CD4-positive, alpha-beta memory T cell (primary cell): ENCODE measurements at regions of chr11 and their contacts with region 1.

Region 1: GRCh38 chr11:6682936-6683861 is at the start of gene MRPL17:
- DNase-seq: peak; percentile 99 to 100 (median 100)
- H3K4me3 ChIP-seq: peak within 1 kb of the TSS; percentile 82 to 99
- H3K4me3 Mint-ChIP-seq: peak within 1 kb of the TSS; percentile 97 to 99 (median 98)
- H3K27ac ChIP-seq: peak within 1 kb of the TSS; percentile 81
- H3K27ac Mint-ChIP-seq: peak within 1 kb of the TSS; percentile 95 to 100 (median 99)
- H3K4me1 ChIP-seq: peaks cover 26% of the 10 kb centered on the region
- H3K4me1 Mint-ChIP-seq: peaks cover 19 to 46% (median 25%) of the 10 kb centered on the region in 4 donors
- H3K27me3 ChIP-seq: no peaks in the 10 kb centered on the region
- H3K27me3 Mint-ChIP-seq: no peaks in the 10 kb centered on the region
- total RNA-seq, gene MRPL17: 33.4 to 36.9 TPM

Region 2: GRCh38 chr11:6320411-6321155 is 362.6 kb before region 1 on chr11 and contains the start of gene CAVIN3:
- CTCF ChIA-PET with region 1: no interaction called
- POLR2A ChIA-PET with region 1: no interaction called
- intact Hi-C with region 1: no loop called
- DNase-seq: peak in 2 of 5 donors; percentile 10 to 37
- H3K4me3 ChIP-seq: no peak within 1 kb of the TSS
- H3K4me3 Mint-ChIP-seq: peak within 1 kb of the TSS; percentile 57 to 87 (median 78)
- H3K27ac ChIP-seq: no peak within 1 kb of the TSS
- H3K27ac Mint-ChIP-seq: peak within 1 kb of the TSS in 4 of 7 donors; percentile 18 to 55 (median 40)
- H3K4me1 ChIP-seq: peaks cover 10% of the 10 kb centered on the region
- H3K4me1 Mint-ChIP-seq: peaks cover 4 to 28% (median 14%) of the 10 kb centered on the region in 4 donors
- H3K27me3 ChIP-seq: peaks cover 12% of the 10 kb centered on the region
- H3K27me3 Mint-ChIP-seq: peaks cover 35 to 41% of the 10 kb centered on the region in 2 donors
- total RNA-seq, gene CAVIN3: 0.36 TPM in 1 of 2 experiments, not detected in the other

Region 3: GRCh38 chr11:6389921-6390724 is 293.1 kb before region 1 on chr11 and contains the start of gene SMPD1:
- CTCF ChIA-PET with region 1: interaction called, 4 read pairs
- POLR2A ChIA-PET with region 1: interaction called, 4 read pairs
- intact Hi-C with region 1: loop called (anchors 1 kb)
- DNase-seq: peak; percentile 91 to 96 (median 92)
- H3K4me3 ChIP-seq: peak within 1 kb of the TSS; percentile 79 to 97
- H3K4me3 Mint-ChIP-seq: peak within 1 kb of the TSS; percentile 93 to 98 (median 95)
- H3K27ac ChIP-seq: peak within 1 kb of the TSS; percentile 83
- H3K27ac Mint-ChIP-seq: peak within 1 kb of the TSS; percentile 98 to 100 (median 99)
- H3K4me1 ChIP-seq: peaks cover 50% of the 10 kb centered on the region
- H3K4me1 Mint-ChIP-seq: peaks cover 24 to 61% (median 44%) of the 10 kb centered on the region in 4 donors
- H3K27me3 ChIP-seq: no peaks in the 10 kb centered on the region
- H3K27me3 Mint-ChIP-seq: no peaks in the 10 kb centered on the region
- total RNA-seq, gene SMPD1: 39.3 to 43.6 TPM

Region 4: DNA sequence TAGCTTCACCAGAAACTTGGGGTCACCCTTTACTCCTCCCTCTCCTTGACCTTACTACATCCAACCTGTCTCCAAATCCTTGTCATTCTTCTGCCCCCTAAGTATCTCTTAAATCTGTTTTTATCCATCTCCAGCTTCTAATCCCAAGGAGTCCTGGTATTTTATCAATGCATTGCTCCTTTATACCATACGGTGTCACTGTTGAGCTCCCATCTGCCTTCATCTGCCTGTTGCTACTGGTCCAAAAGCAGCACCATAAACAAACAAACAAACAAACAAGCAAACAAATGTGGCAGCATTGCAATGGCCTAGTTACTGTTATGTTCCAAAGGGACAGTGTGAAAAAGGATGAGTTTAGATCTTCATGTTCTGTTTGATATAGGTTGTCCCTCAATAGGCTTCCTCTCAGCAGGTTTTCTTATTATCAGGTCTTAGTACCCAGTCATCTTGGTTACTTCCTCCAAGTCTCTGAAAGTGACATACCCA is 151.9 kb before region 1 on chr11:
- CTCF ChIA-PET with region 1: interaction called, 104 read pairs
- POLR2A ChIA-PET with region 1: interaction called, 18 read pairs
- intact Hi-C with region 1: loop called (anchors 1 kb)
- DNase-seq: peak; percentile 46 to 54 (median 50)
- H3K4me3 ChIP-seq: no peak overlapping the region
- H3K4me3 Mint-ChIP-seq: no peak overlapping the region
- H3K27ac ChIP-seq: no peak overlapping the region
- H3K27ac Mint-ChIP-seq: no peak overlapping the region
- H3K4me1 ChIP-seq: peaks cover 7% of the 10 kb centered on the region
- H3K4me1 Mint-ChIP-seq: peaks cover 6 to 14% (median 8%) of the 10 kb centered on the region in 4 donors
- H3K27me3 ChIP-seq: no peaks in the 10 kb centered on the region
- H3K27me3 Mint-ChIP-seq: no peaks in the 10 kb centered on the region

Region 5: DNA sequence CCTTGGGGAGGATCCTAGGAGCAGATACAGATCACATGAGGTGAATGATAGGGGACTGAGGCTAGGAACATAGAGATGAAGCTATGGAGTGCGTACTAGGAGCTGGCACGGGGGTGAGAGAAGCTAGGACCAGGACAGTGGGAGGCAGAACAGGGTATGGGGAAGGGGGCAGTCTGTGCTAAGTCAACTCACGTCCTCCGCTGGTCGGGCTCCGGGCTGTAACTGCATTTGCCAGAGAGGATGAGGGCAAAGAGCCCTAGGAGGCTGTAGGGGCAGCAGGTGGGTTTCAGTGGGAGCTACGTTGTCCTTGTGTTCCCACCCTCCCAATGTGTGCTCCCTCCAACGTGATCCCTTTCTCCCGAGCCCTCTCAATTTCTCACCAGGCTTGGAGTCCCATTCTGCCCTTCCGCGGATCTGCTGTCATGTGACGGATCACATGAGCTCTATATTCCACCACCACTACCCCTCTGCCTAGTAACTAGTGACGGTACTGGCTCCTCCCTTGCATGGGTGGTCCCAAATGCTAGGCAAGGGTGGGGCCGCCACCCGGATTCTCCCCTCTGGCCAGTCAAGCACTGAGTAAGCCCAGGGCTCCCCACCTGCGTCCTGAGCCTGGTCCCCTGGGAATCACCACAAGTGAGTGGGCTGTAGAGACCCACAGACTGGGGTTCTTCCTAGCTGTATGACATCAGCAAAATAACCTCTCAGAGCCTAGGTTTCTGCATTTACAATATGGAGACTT is 64.0 kb before region 1 on chr11 and contains the start of gene TPP1:
- CTCF ChIA-PET with region 1: interaction called, 64 read pairs
- POLR2A ChIA-PET with region 1: interaction called, 172 read pairs
- intact Hi-C with region 1: loop called (anchors 1 kb)
- DNase-seq: peak; percentile 88 to 94 (median 91)
- H3K4me3 ChIP-seq: peak within 1 kb of the TSS; percentile 68 to 86
- H3K4me3 Mint-ChIP-seq: no peak within 1 kb of the TSS
- H3K27ac ChIP-seq: peak within 1 kb of the TSS; percentile 90
- H3K27ac Mint-ChIP-seq: no peak within 1 kb of the TSS
- H3K4me1 ChIP-seq: peaks cover 29% of the 10 kb centered on the region
- H3K4me1 Mint-ChIP-seq: peaks cover 6 to 12% (median 9%) of the 10 kb centered on the region in 4 donors
- H3K27me3 ChIP-seq: no peaks in the 10 kb centered on the region
- H3K27me3 Mint-ChIP-seq: no peaks in the 10 kb centered on the region
- total RNA-seq, gene TPP1: 194 to 198 TPM

Region 6: GRCh38 chr11:6667733-6668374 is 15.3 kb before region 1 on chr11:
- CTCF ChIA-PET with region 1: interaction called, 64 read pairs
- POLR2A ChIA-PET with region 1: interaction called, 55 read pairs
- intact Hi-C with region 1: loop called (anchors 1 kb)
- DNase-seq: peak; percentile 48 to 78 (median 54)
- H3K4me3 ChIP-seq: no peak overlapping the region
- H3K4me3 Mint-ChIP-seq: peak overlapping the region in 7 of 8 donors; percentile 5 to 35 (median 16)
- H3K27ac ChIP-seq: no peak overlapping the region
- H3K27ac Mint-ChIP-seq: peak overlapping the region; percentile 11 to 88 (median 74)
- H3K4me1 ChIP-seq: peaks cover 59% of the 10 kb centered on the region
- H3K4me1 Mint-ChIP-seq: peaks cover 45 to 87% (median 54%) of the 10 kb centered on the region in 4 donors
- H3K27me3 ChIP-seq: no peaks in the 10 kb centered on the region
- H3K27me3 Mint-ChIP-seq: no peaks in the 10 kb centered on the region

Region 7: DNA sequence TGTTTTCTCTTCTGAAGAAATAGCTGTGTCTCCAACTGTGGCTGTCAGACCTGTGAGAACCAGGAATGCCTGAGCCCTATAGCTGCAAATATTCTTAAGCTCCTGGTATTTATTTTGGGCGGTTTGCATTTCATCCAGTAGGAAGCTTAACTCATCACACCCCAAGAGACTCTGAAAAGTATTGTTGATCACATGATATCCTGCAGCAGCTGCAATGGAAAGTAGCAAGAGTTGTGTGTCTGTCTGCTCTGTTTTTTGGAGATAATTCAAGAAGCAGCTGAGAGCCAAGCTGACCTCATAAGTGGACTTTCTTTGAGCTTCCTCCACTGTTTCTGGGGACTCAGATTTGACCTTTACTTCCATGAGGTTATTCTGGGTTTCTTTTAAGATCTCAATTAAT is 36.4 kb after region 1 on chr11:
- CTCF ChIA-PET with region 1: no interaction called
- POLR2A ChIA-PET with region 1: no interaction called
- intact Hi-C with region 1: no loop called
- DNase-seq: no peak
- H3K4me3 ChIP-seq: no peak overlapping the region
- H3K4me3 Mint-ChIP-seq: peak overlapping the region in 2 of 8 donors; percentile 27 to 31
- H3K27ac ChIP-seq: no peak overlapping the region
- H3K27ac Mint-ChIP-seq: peak overlapping the region; percentile 0 to 86 (median 59)
- H3K4me1 ChIP-seq: peaks cover 75% of the 10 kb centered on the region
- H3K4me1 Mint-ChIP-seq: peaks cover 56 to 91% (median 77%) of the 10 kb centered on the region in 4 donors
- H3K27me3 ChIP-seq: no peaks in the 10 kb centered on the region
- H3K27me3 Mint-ChIP-seq: no peaks in the 10 kb centered on the region

Region 8: DNA sequence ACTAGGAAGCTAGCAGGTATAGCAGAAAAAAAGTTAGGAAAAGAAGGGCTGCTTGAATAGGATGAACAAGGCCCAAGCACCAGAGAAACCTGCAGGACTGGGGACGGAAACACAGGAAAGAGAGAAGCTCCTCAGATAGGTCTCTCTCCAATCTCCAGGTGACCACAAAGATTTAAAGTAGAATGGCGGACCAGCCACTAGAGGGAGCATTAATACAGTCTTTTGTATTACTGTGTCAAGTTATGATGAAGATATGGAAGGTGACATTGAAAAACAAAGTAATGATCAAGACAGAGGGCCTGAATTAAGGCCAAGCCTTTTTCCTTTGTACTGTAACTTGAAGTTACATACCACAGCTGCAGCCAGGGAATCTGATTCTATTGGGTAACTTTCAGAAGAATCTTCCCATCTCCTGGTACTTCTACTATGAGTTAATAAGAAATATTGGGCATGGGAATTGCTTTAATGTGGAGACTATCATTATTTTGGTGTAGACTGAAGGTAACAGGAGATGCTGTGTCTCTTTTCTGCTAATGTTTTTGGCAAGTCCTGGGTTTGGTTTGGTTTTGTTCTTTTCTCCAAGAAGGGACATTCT is 54.8 kb after region 1 on chr11:
- CTCF ChIA-PET with region 1: interaction called, 16 read pairs
- POLR2A ChIA-PET with region 1: interaction called, 3 read pairs
- intact Hi-C with region 1: no loop called
- DNase-seq: peak; percentile 73 to 82 (median 75)
- H3K4me3 ChIP-seq: no peak overlapping the region
- H3K4me3 Mint-ChIP-seq: peak overlapping the region; percentile 23 to 77 (median 38)
- H3K27ac ChIP-seq: peak overlapping the region; percentile 38
- H3K27ac Mint-ChIP-seq: peak overlapping the region; percentile 60 to 89 (median 75)
- H3K4me1 ChIP-seq: peaks cover 88% of the 10 kb centered on the region
- H3K4me1 Mint-ChIP-seq: peaks cover 75 to 91% (median 83%) of the 10 kb centered on the region in 4 donors
- H3K27me3 ChIP-seq: no peaks in the 10 kb centered on the region
- H3K27me3 Mint-ChIP-seq: no peaks in the 10 kb centered on the region